A673 (cell line): ENCODE measurements at regions of chr9 and their contacts with region 1.

Region 1: DNA sequence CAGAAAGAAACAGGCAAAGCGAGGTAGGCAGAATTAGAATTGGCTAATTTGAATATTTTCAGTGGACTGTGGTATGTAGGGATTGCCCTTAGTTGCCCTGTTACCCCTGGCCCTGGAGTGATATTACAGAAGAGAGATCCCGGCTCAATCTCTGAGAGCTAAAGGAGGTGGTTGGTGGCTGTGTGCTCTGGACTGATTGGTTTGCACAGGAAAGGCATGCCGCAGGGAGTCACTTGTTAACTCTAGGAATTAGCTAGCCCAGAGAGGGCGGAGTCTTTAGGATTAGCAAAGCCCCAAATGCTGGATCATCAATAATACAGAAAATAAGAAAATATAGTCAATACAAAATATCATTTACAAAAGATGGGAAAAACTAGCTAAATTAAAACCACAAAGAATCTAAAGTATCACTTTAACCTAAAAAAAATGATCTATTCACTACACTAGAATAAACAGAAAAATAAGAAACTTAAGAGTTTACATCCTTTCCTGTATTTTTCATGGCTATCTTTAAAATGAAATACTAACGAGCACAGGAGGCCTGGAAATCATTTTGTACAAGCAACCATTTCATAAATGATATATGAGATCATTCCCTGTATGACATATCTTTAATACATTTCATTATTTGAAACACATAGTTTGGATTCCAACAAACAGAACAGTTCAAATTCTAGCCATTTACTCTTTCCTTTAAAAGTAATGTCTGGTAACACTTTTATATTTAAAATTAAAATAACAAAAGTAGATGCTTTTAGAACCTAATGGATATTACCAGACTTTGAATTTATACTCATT is 71.1 kb downstream of the GNAQ start:
- DNase-seq: peak; percentile 62
- H3K4me3 ChIP-seq: no peak overlapping the region
- H3K27ac ChIP-seq: no peak overlapping the region
- H3K4me1 ChIP-seq: peaks cover 40% of the 10 kb centered on the region
- H3K27me3 ChIP-seq: no peaks in the 10 kb centered on the region
- CTCF ChIP-seq: no peak

Region 2: GRCh38 chr9:77865385-77866047 is 95.0 kb before region 1 on chr9:
- CTCF ChIA-PET with region 1: no interaction called
- POLR2A ChIA-PET with region 1: no interaction called
- intact Hi-C with region 1: loop called (anchors 5 kb)
- DNase-seq: no peak
- H3K4me3 ChIP-seq: no peak overlapping the region
- H3K27ac ChIP-seq: no peak overlapping the region
- H3K4me1 ChIP-seq: no peaks in the 10 kb centered on the region
- H3K27me3 ChIP-seq: no peaks in the 10 kb centered on the region
- CTCF ChIP-seq: no peak

Region 3: DNA sequence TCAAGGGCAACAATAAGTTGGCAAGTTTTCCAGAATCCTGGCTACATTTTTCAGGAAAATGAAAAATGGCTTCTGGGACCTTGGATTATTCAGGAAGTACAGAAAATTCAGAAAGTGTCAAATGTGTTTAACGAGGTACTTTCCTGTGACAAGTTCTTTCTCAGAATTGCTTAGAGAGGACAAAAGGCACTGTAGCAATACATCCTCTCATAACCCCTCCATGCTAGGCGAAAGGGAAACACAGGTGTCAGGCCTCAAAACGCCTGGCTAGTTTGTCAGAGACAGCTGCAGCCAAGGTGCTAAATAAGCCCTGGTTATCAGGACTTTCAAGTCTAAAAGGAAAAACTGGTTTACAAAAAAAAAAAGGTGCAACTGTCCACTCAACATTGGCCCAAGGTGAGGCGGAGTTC is 44.1 kb before region 1 on chr9:
- CTCF ChIA-PET with region 1: no interaction called
- POLR2A ChIA-PET with region 1: no interaction called
- intact Hi-C with region 1: no loop called
- DNase-seq: no peak
- H3K4me3 ChIP-seq: no peak overlapping the region
- H3K27ac ChIP-seq: no peak overlapping the region
- H3K4me1 ChIP-seq: peaks cover 32% of the 10 kb centered on the region
- H3K27me3 ChIP-seq: no peaks in the 10 kb centered on the region
- CTCF ChIP-seq: no peak

Region 4: GRCh38 chr9:77985996-77986395 is 25.4 kb after region 1 on chr9:
- CTCF ChIA-PET with region 1: no interaction called
- POLR2A ChIA-PET with region 1: interaction called, 10 read pairs
- intact Hi-C with region 1: no loop called
- DNase-seq: no peak
- H3K4me3 ChIP-seq: no peak overlapping the region
- H3K27ac ChIP-seq: no peak overlapping the region
- H3K4me1 ChIP-seq: peaks cover 21% of the 10 kb centered on the region
- H3K27me3 ChIP-seq: no peaks in the 10 kb centered on the region
- CTCF ChIP-seq: no peak